ENCODE measurements at regions of chr6 and their contacts with region 1.

Region 1: GRCh38 chr6:16964553-16965501 is 137.0 kb upstream of the STMND1 start:
- DNase-seq: peak; percentile 72
- H3K4me3 Mint-ChIP-seq: no peak overlapping the region
- H3K27ac Mint-ChIP-seq: no peak overlapping the region
- H3K4me1 Mint-ChIP-seq: peaks cover 3% of the 10 kb centered on the region
- H3K27me3 Mint-ChIP-seq: peaks cover 25% of the 10 kb centered on the region

Region 2: GRCh38 chr6:16836144-16836981 is 128.5 kb before region 1 on chr6:
- CTCF ChIA-PET with region 1: no interaction called
- POLR2A ChIA-PET with region 1: no interaction called
- DNase-seq: no peak
- H3K4me3 Mint-ChIP-seq: peak overlapping the region; percentile 68
- H3K27ac Mint-ChIP-seq: peak overlapping the region; percentile 85
- H3K4me1 Mint-ChIP-seq: peaks cover 39% of the 10 kb centered on the region
- H3K27me3 Mint-ChIP-seq: peaks cover 5% of the 10 kb centered on the region

Region 3: GRCh38 chr6:16953446-16953845 is 11.4 kb before region 1 on chr6:
- CTCF ChIA-PET with region 1: interaction called, 13 read pairs
- POLR2A ChIA-PET with region 1: no interaction called
- DNase-seq: no peak
- H3K4me3 Mint-ChIP-seq: no peak overlapping the region
- H3K27ac Mint-ChIP-seq: no peak overlapping the region
- H3K4me1 Mint-ChIP-seq: peaks cover 13% of the 10 kb centered on the region
- H3K27me3 Mint-ChIP-seq: peaks cover 26% of the 10 kb centered on the region

Measured in activated CD4-positive, alpha-beta memory T cell treated with anti-CD3 and anti-CD28 coated beads, Interleukin-2, amount 10 ng/mL, durations not matched to agents 7 days and 5 days (primary cell).